ENCODE measurements at regions of chr5 and their contacts with region 1.

Region 1: DNA sequence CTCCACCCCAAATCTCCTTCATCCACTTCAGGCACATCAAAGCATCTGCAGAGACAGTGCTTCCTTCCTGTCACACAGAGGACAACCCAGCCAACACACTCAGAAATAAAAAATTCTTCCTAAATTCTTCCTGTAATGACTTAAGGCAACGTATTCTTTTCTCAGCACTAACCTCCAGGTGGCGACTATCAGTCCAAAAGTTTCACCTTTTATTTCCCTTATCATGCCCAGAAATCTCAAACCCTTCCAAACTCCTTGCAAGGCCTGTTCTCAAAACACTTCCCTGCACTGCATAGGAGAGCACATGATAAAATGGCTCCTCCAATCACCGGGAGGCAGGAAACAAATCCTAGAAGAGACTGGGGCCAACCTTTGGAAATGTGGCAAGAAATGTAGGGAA is 35.1 kb downstream of the SLIT3 start:
- DNase-seq: peak; percentile 71
- ATAC-seq: peak; percentile 48
- H3K4me3 ChIP-seq: no peak overlapping the region
- H3K27ac ChIP-seq: no peak overlapping the region
- H3K4me1 ChIP-seq: no peaks in the 10 kb centered on the region
- H3K27me3 ChIP-seq: peaks cover 25% of the 10 kb centered on the region
- CTCF ChIP-seq: peak; percentile 83

Region 2: GRCh38 chr5:169307646-169308045 is 41.8 kb after region 1 on chr5:
- CTCF ChIA-PET with region 1: no interaction called
- POLR2A ChIA-PET with region 1: no interaction called
- intact Hi-C with region 1: no loop called
- DNase-seq: no peak
- ATAC-seq: no peak
- H3K4me3 ChIP-seq: no peak overlapping the region
- H3K27ac ChIP-seq: no peak overlapping the region
- H3K4me1 ChIP-seq: no peaks in the 10 kb centered on the region
- H3K27me3 ChIP-seq: peaks cover 26% of the 10 kb centered on the region
- CTCF ChIP-seq: no peak

Region 3: DNA sequence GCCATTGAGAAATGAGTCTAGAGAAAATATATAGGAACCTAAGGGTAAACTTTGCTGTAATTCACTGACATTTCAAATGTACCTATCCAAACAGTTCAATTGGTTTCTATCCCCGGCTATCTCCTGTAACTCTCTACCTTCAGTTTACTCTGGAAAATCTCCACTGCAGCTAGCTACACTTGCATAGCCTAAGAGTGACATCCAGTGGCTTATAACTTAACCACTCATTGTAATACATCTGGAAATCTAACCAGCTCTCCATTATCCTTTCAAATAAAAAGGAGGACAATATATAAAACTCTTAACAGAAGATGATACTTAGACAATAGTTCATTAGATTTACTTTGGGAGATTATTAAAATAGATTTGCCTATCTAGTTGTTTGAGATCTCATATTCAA is 282.4 kb after region 1 on chr5:
- CTCF ChIA-PET with region 1: no interaction called
- POLR2A ChIA-PET with region 1: no interaction called
- intact Hi-C with region 1: loop called (anchors 2 kb)
- DNase-seq: peak; percentile 66
- ATAC-seq: peak; percentile 92
- H3K4me3 ChIP-seq: no peak overlapping the region
- H3K27ac ChIP-seq: no peak overlapping the region
- H3K4me1 ChIP-seq: no peaks in the 10 kb centered on the region
- H3K27me3 ChIP-seq: peaks cover 22% of the 10 kb centered on the region
- CTCF ChIP-seq: peak; percentile 67

Region 4: GRCh38 chr5:169583424-169584204 is 317.7 kb after region 1 on chr5 and contains the start of gene SPDL1:
- CTCF ChIA-PET with region 1: no interaction called
- POLR2A ChIA-PET with region 1: no interaction called
- intact Hi-C with region 1: loop called (anchors 1 kb)
- DNase-seq: peak; percentile 97
- ATAC-seq: peak; percentile 92
- H3K4me3 ChIP-seq: peak within 1 kb of the TSS; percentile 88
- H3K27ac ChIP-seq: peak within 1 kb of the TSS; percentile 66
- H3K4me1 ChIP-seq: peaks cover 17% of the 10 kb centered on the region
- H3K27me3 ChIP-seq: no peaks in the 10 kb centered on the region
- CTCF ChIP-seq: no peak
- total RNA-seq, gene SPDL1: 29.9 and 38.8 TPM in 2 replicates